HEK293T (cell line): ENCODE measurements at regions of chr2 and their contacts with region 1.

Region 1: GRCh38 chr2:231900486-231900942 is 25.7 kb downstream of the NPPC start:
- DNase-seq: peak; percentile 86

Region 2: GRCh38 chr2:231910771-231911170 is 10.3 kb after region 1 on chr2:
- CTCF ChIA-PET with region 1: interaction called, 13 read pairs
- POLR2A ChIA-PET with region 1: no interaction called
- DNase-seq: no peak

Region 3: GRCh38 chr2:231925303-231926179 is 25.0 kb after region 1 on chr2:
- CTCF ChIA-PET with region 1: interaction called, 10 read pairs
- POLR2A ChIA-PET with region 1: no interaction called
- DNase-seq: peak; percentile 84

Region 4: GRCh38 chr2:231961349-231962166 is 61.0 kb after region 1 on chr2 and contains the start of gene DIS3L2:
- CTCF ChIA-PET with region 1: no interaction called
- POLR2A ChIA-PET with region 1: no interaction called
- DNase-seq: peak; percentile 78

Region 5: GRCh38 chr2:232018181-232018580 is 117.7 kb after region 1 on chr2:
- CTCF ChIA-PET with region 1: no interaction called
- POLR2A ChIA-PET with region 1: no interaction called
- DNase-seq: no peak

Region 6: GRCh38 chr2:232142049-232142448 is 241.5 kb after region 1 on chr2:
- CTCF ChIA-PET with region 1: interaction called, 13 read pairs
- POLR2A ChIA-PET with region 1: no interaction called
- DNase-seq: peak; percentile 47